ENCODE measurements at regions of chr7 and their contacts with region 1.

Region 1: GRCh38 chr7:40468891-40469864 is 334.4 kb downstream of the SUGCT start:
- DNase-seq: peak; percentile 93
- ATAC-seq: peak; percentile 90
- H3K4me3 ChIP-seq: no peak overlapping the region
- H3K27ac ChIP-seq: peak overlapping the region; percentile 95
- H3K4me1 ChIP-seq: peaks cover 10% of the 10 kb centered on the region
- H3K27me3 ChIP-seq: no peaks in the 10 kb centered on the region
- CTCF ChIP-seq: no peak
- POLR2A ChIP-seq: peak; percentile 60; the same call in 1 of the 2 replicates
- RAD21 ChIP-seq: no peak

Region 2: GRCh38 chr7:40015790-40016296 is 453.3 kb before region 1 on chr7:
- CTCF ChIA-PET with region 1: no interaction called
- POLR2A ChIA-PET with region 1: no interaction called
- dilution Hi-C with region 1: no loop called
- in situ Hi-C with region 1: no loop called
- intact Hi-C with region 1: no loop called
- DNase-seq: peak; percentile 35
- ATAC-seq: no peak; the same call in 1 of the 2 replicates
- H3K4me3 ChIP-seq: no peak overlapping the region
- H3K27ac ChIP-seq: no peak overlapping the region
- H3K4me1 ChIP-seq: peaks cover 5% of the 10 kb centered on the region
- H3K27me3 ChIP-seq: no peaks in the 10 kb centered on the region
- CTCF ChIP-seq: no peak
- POLR2A ChIP-seq: no peak
- RAD21 ChIP-seq: no peak

Region 3: GRCh38 chr7:40403703-40404476 is 65.3 kb before region 1 on chr7:
- CTCF ChIA-PET with region 1: no interaction called
- POLR2A ChIA-PET with region 1: no interaction called
- dilution Hi-C with region 1: no loop called
- in situ Hi-C with region 1: no loop called
- intact Hi-C with region 1: no loop called
- DNase-seq: no peak
- ATAC-seq: no peak
- H3K4me3 ChIP-seq: no peak overlapping the region
- H3K27ac ChIP-seq: no peak overlapping the region
- H3K4me1 ChIP-seq: no peaks in the 10 kb centered on the region
- H3K27me3 ChIP-seq: no peaks in the 10 kb centered on the region
- CTCF ChIP-seq: no peak
- POLR2A ChIP-seq: no peak
- RAD21 ChIP-seq: no peak

Region 4: GRCh38 chr7:40437498-40437897 is 31.7 kb before region 1 on chr7:
- CTCF ChIA-PET with region 1: no interaction called
- POLR2A ChIA-PET with region 1: no interaction called
- dilution Hi-C with region 1: no loop called
- in situ Hi-C with region 1: no loop called
- intact Hi-C with region 1: loop called (anchors 1 kb)
- DNase-seq: peak; percentile 95
- ATAC-seq: peak; percentile 98
- H3K4me3 ChIP-seq: no peak overlapping the region
- H3K27ac ChIP-seq: peak overlapping the region; percentile 85
- H3K4me1 ChIP-seq: peaks cover 11% of the 10 kb centered on the region
- H3K27me3 ChIP-seq: no peaks in the 10 kb centered on the region
- CTCF ChIP-seq: no peak
- POLR2A ChIP-seq: no peak
- RAD21 ChIP-seq: no peak

Measured in IMR-90 (cell line).